ENCODE measurements at regions of chr19 and their contacts with region 1.

Region 1: GRCh38 chr19:14347999-14348889 is 33.0 kb upstream of the ADGRE5 start:
- DNase-seq: peak; percentile 95
- H3K4me3 ChIP-seq: peak overlapping the region; percentile 23 to 55; a peak in 2 of 4 replicates
- H3K27ac ChIP-seq: no peak overlapping the region
- H3K4me1 ChIP-seq: no peaks in the 10 kb centered on the region; a peak in 1 of 4 replicates
- H3K27me3 ChIP-seq: no peaks in the 10 kb centered on the region
- CTCF ChIP-seq: peak; percentile 94
- EP300 ChIP-seq: no peak
- RAD21 ChIP-seq: peak; percentile 90

Region 2: GRCh38 chr19:14147797-14148605 is 200.2 kb before region 1 on chr19:
- CTCF ChIA-PET with region 1: interaction called, 256 read pairs
- POLR2A ChIA-PET with region 1: no interaction called
- DNase-seq: peak; percentile 92
- H3K4me3 ChIP-seq: no peak overlapping the region; a peak in 1 of 4 replicates
- H3K27ac ChIP-seq: peak overlapping the region in 1 of 2 experiments; percentile 17; a peak in 1 of 4 replicates
- H3K4me1 ChIP-seq: peaks cover 0 to 26% of the 10 kb centered on the region in 2 experiments; a peak in 1 of 4 replicates
- H3K27me3 ChIP-seq: no peaks in the 10 kb centered on the region
- CTCF ChIP-seq: peak; percentile 77
- EP300 ChIP-seq: no peak
- RAD21 ChIP-seq: peak; percentile 80

Region 3: DNA sequence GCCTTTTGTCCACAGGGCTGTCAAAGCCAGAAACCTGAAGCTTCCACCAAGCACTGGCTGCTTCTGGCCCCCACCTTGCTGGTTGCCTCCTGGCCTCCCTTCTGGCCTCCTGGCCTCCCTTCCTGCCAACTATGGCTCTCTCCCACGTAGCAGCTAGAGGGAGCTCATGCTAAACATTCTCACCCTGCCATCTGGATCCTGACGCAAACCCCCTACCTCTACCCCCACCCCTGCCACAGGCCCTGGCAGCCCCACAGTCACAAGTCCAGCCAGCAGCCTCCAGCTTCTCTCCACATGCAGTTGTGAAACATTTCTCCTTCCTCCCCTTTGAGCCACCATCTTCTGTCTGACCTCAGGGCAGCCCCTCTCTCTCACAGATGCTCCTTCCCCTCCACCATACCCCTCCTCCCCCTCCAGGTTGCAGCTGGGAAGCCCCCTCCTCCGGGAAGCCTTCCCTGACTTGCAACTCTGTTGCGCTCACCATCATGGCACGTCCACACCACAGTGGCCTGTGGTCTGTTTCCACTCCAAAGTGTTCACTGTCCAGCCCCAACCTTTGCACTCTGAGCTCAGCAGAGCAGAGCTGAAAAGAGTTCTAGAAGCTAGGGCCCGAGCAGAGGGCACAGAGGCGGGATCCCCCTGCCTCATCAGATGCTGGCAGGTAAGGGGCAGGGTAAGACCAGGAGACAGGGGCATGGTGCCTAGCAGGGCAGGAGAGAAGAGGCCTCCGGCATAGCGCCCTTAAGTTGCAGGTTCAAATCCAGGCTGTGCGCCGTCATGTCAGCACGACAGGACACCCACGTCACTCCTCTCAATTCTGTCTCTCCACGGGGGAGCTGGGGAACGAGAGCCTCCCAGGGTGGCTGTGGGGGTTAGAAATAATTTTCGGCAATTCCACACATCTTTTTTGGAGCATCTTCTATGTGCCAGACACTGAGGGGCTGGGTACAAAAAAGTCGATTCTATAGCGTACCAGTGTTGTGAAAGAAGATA is 149.6 kb before region 1 on chr19:
- CTCF ChIA-PET with region 1: interaction called, 64 read pairs
- POLR2A ChIA-PET with region 1: no interaction called
- DNase-seq: peak; percentile 51
- H3K4me3 ChIP-seq: no peak overlapping the region
- H3K27ac ChIP-seq: no peak overlapping the region
- H3K4me1 ChIP-seq: no peaks in the 10 kb centered on the region; a peak in 1 of 4 replicates
- H3K27me3 ChIP-seq: no peaks in the 10 kb centered on the region
- CTCF ChIP-seq: no peak
- EP300 ChIP-seq: no peak
- RAD21 ChIP-seq: peak; percentile 31; the same call in 1 of the 2 replicates

Region 4: GRCh38 chr19:14301150-14301549 is 47.1 kb before region 1 on chr19:
- CTCF ChIA-PET with region 1: interaction called, 10 read pairs
- POLR2A ChIA-PET with region 1: no interaction called
- DNase-seq: no peak
- H3K4me3 ChIP-seq: no peak overlapping the region
- H3K27ac ChIP-seq: no peak overlapping the region
- H3K4me1 ChIP-seq: no peaks in the 10 kb centered on the region
- H3K27me3 ChIP-seq: no peaks in the 10 kb centered on the region; the same call in 1 of the 2 replicates
- CTCF ChIP-seq: no peak
- EP300 ChIP-seq: no peak
- RAD21 ChIP-seq: no peak

Region 5: GRCh38 chr19:14337510-14337909 is 10.7 kb before region 1 on chr19:
- CTCF ChIA-PET with region 1: interaction called, 35 read pairs
- POLR2A ChIA-PET with region 1: no interaction called
- DNase-seq: peak; percentile 65
- H3K4me3 ChIP-seq: no peak overlapping the region
- H3K27ac ChIP-seq: no peak overlapping the region
- H3K4me1 ChIP-seq: no peaks in the 10 kb centered on the region
- H3K27me3 ChIP-seq: no peaks in the 10 kb centered on the region
- CTCF ChIP-seq: no peak
- EP300 ChIP-seq: no peak
- RAD21 ChIP-seq: no peak

Region 6: GRCh38 chr19:14405758-14406644 is 57.8 kb after region 1 on chr19:
- CTCF ChIA-PET with region 1: interaction called, 23 read pairs
- POLR2A ChIA-PET with region 1: no interaction called
- DNase-seq: peak; percentile 100
- H3K4me3 ChIP-seq: peak overlapping the region in 1 of 2 experiments; percentile 14; a peak in 2 of 4 replicates
- H3K27ac ChIP-seq: peak overlapping the region; percentile 24 to 66; a peak in 3 of 4 replicates
- H3K4me1 ChIP-seq: peaks cover 0 to 7% of the 10 kb centered on the region in 2 experiments; a peak in 1 of 4 replicates
- H3K27me3 ChIP-seq: no peaks in the 10 kb centered on the region
- CTCF ChIP-seq: peak; percentile 66
- EP300 ChIP-seq: no peak
- RAD21 ChIP-seq: peak; percentile 82

Region 7: DNA sequence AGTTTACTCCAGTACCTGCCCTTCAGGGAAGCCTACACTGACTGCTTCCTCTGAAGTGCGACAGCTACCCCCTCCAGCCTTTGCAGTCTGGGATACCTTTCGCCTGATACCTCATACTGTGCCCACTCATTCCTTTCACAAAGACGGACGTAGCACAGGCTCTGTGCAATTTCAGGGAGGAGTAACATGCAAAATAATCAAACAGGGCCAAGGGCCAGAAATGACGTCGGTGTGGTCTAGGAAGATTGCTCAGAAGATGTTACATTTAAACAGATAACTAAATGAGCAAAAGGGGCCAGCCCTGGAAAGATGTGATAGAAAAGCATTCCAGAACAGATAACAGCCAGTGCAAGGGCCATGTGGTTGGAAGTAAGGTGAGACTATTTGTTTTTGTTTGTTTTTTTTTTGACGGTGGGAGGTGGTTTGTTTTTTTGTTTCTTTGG is 77.5 kb after region 1 on chr19:
- CTCF ChIA-PET with region 1: no interaction called
- POLR2A ChIA-PET with region 1: no interaction called
- DNase-seq: no peak
- H3K4me3 ChIP-seq: no peak overlapping the region
- H3K27ac ChIP-seq: no peak overlapping the region
- H3K4me1 ChIP-seq: no peaks in the 10 kb centered on the region
- H3K27me3 ChIP-seq: no peaks in the 10 kb centered on the region
- CTCF ChIP-seq: no peak
- EP300 ChIP-seq: no peak
- RAD21 ChIP-seq: no peak

Region 8: GRCh38 chr19:14510308-14511228 is 162.3 kb after region 1 on chr19:
- CTCF ChIA-PET with region 1: no interaction called
- POLR2A ChIA-PET with region 1: no interaction called
- DNase-seq: no peak
- H3K4me3 ChIP-seq: no peak overlapping the region
- H3K27ac ChIP-seq: peak overlapping the region in 1 of 2 experiments; percentile 80; a peak in 2 of 4 replicates
- H3K4me1 ChIP-seq: peaks cover 5 to 14% of the 10 kb centered on the region in 2 experiments; a peak in 2 of 4 replicates
- H3K27me3 ChIP-seq: no peaks in the 10 kb centered on the region
- CTCF ChIP-seq: no peak
- EP300 ChIP-seq: no peak
- RAD21 ChIP-seq: no peak